ENCODE measurements at regions of chr9 and their contacts with region 1.

Region 1: DNA sequence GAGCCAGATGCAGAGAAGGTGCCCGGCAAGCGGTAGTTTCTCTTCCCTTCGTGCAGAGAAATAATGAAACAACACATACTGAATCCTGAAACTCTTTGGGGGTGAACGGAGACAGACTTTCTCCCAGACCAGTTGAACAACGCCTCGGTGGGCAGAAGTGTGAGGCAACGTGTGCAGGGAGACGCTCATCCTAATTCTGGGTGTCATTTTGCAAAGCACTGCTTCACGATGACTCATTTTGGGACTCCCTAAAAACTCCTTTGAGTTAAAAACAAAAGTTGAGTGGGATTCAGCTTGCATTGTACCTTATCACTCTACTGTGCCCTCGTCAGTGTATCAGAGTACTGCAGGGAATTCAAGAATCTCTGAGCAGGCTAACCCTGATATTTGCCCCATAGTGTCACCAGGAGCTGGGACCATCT is 3.5 kb upstream of the NEK6 start:
- DNase-seq: peak; percentile 80
- ATAC-seq: peak; percentile 91
- H3K4me3 Mint-ChIP-seq: no peak overlapping the region
- H3K27ac Mint-ChIP-seq: no peak overlapping the region
- H3K4me1 Mint-ChIP-seq: peaks cover 34% of the 10 kb centered on the region
- H3K27me3 Mint-ChIP-seq: peaks cover 38% of the 10 kb centered on the region

Region 2: GRCh38 chr9:124202447-124202971 is 51.8 kb before region 1 on chr9:
- CTCF ChIA-PET with region 1: no interaction called
- POLR2A ChIA-PET with region 1: no interaction called
- intact Hi-C with region 1: loop called (anchors 1 to 5 kb)
- DNase-seq: peak; percentile 93
- ATAC-seq: peak; percentile 94
- H3K4me3 Mint-ChIP-seq: peak overlapping the region; percentile 56
- H3K27ac Mint-ChIP-seq: peak overlapping the region; percentile 97
- H3K4me1 Mint-ChIP-seq: peaks cover 40% of the 10 kb centered on the region
- H3K27me3 Mint-ChIP-seq: peaks cover 8% of the 10 kb centered on the region

Region 3: DNA sequence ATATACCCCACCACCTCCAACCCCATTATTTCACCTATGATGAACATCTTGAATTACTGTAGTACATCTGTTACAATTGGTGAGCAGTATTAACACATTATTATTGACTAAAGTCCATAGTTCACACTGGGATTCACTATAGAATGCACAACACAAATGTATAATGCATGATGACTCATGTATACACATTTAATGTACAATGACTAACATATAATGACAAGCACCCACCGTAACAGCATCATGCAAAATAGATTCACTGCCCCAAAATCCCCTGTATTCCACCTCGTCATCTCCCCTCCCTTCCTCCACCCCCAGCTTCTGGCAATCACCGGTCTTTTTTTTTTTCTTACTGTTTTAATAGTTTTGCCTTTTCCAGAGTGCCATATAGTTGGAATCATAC is 43.6 kb before region 1 on chr9:
- CTCF ChIA-PET with region 1: no interaction called
- POLR2A ChIA-PET with region 1: no interaction called
- intact Hi-C with region 1: loop called in 1 of 2 experiments (anchors 2 kb)
- DNase-seq: peak; percentile 75
- ATAC-seq: peak; percentile 95
- H3K4me3 Mint-ChIP-seq: no peak overlapping the region
- H3K27ac Mint-ChIP-seq: no peak overlapping the region
- H3K4me1 Mint-ChIP-seq: peaks cover 61% of the 10 kb centered on the region
- H3K27me3 Mint-ChIP-seq: peaks cover 5% of the 10 kb centered on the region

Region 4: GRCh38 chr9:124216567-124217176 is 37.6 kb before region 1 on chr9:
- CTCF ChIA-PET with region 1: interaction called, 4 read pairs
- POLR2A ChIA-PET with region 1: no interaction called
- intact Hi-C with region 1: loop called (anchors 2 kb)
- DNase-seq: peak; percentile 76
- ATAC-seq: peak; percentile 67
- H3K4me3 Mint-ChIP-seq: no peak overlapping the region
- H3K27ac Mint-ChIP-seq: peak overlapping the region; percentile 90
- H3K4me1 Mint-ChIP-seq: peaks cover 59% of the 10 kb centered on the region
- H3K27me3 Mint-ChIP-seq: no peaks in the 10 kb centered on the region

Region 5: DNA sequence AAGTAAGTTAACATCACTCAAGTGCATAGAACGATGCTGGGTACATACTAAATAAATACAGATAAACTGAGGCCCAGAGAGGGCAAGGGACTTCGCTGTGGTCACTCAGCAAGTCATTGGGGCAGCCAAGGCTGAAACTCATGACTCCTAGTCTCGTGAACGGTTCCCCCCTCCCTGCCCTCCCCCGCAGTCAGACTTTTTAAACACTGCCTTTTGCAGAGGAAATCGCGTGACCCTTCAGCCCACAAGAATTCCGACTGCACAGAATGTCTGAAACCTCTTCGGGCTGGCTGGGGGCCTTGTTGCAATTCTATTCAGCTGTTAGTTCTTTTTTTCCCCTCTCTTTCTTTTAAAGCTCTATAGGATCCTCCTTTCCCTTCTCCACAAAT is 31.6 kb after region 1 on chr9:
- CTCF ChIA-PET with region 1: no interaction called
- POLR2A ChIA-PET with region 1: no interaction called
- intact Hi-C with region 1: loop called (anchors 1 to 5 kb)
- DNase-seq: peak; percentile 72
- ATAC-seq: peak; percentile 37
- H3K4me3 Mint-ChIP-seq: peak overlapping the region; percentile 58
- H3K27ac Mint-ChIP-seq: peak overlapping the region; percentile 93
- H3K4me1 Mint-ChIP-seq: peaks cover 31% of the 10 kb centered on the region
- H3K27me3 Mint-ChIP-seq: no peaks in the 10 kb centered on the region